ENCODE measurements at regions of chr19 and their contacts with region 1.

Region 1: DNA sequence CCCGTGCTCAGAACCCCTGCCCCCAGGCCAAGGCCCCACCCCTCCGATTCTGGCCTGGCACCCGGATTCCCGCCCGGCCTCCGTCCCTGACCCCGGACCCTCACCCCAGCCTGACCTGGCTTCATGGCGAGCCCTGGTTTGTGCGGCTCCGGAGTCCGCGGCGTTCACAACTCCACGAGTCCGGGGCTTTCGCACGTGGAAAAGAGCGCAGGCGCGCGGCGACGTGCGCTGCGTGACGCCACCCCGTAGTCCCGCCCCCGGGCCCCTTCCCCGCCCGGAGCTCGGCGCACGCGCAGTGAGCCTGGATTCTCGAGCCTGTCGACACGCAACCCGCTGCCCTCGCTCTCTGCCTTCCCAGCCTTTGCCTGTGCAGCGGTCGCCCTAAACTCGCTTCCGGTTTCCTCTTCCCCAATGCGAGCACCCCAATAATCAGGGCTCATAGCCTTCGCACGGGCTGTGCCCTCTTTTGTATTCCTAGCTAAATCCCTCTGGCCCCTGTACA is at the start of gene FBL:
- DNase-seq: peak; percentile 99
- ATAC-seq: peak; percentile 95 to 97 (median 95)
- H3K4me3 ChIP-seq: peak within 1 kb of the TSS; percentile 92
- H3K4me3 Mint-ChIP-seq: peak within 1 kb of the TSS; percentile 92
- H3K27ac ChIP-seq: peak within 1 kb of the TSS; percentile 89
- H3K27ac Mint-ChIP-seq: peak within 1 kb of the TSS; percentile 92 to 94
- H3K4me1 ChIP-seq: peaks cover 32% of the 10 kb centered on the region
- H3K4me1 Mint-ChIP-seq: peaks cover 48% of the 10 kb centered on the region in 2 donors
- H3K27me3 ChIP-seq: no peaks in the 10 kb centered on the region
- H3K27me3 Mint-ChIP-seq: peaks cover 0 to 9% of the 10 kb centered on the region in 2 donors
- CTCF ChIP-seq: no peak
- total RNA-seq, gene FBL: 181 to 213 (median 201) TPM

Region 2: GRCh38 chr19:39546599-39546998 is 299.6 kb before region 1 on chr19:
- intact Hi-C with region 1: loop called (anchors 2 kb)
- DNase-seq: no peak
- ATAC-seq: no peak
- H3K4me3 ChIP-seq: no peak overlapping the region
- H3K4me3 Mint-ChIP-seq: no peak overlapping the region
- H3K27ac ChIP-seq: no peak overlapping the region
- H3K27ac Mint-ChIP-seq: no peak overlapping the region
- H3K4me1 ChIP-seq: peaks cover under 1% of the 10 kb centered on the region
- H3K4me1 Mint-ChIP-seq: peaks cover 5 to 6% of the 10 kb centered on the region in 2 donors
- H3K27me3 ChIP-seq: no peaks in the 10 kb centered on the region
- H3K27me3 Mint-ChIP-seq: peaks cover 12 to 16% of the 10 kb centered on the region in 2 donors
- CTCF ChIP-seq: no peak

Region 3: GRCh38 chr19:39765091-39766076 is 80.8 kb before region 1 on chr19:
- intact Hi-C with region 1: loop called (anchors 2 kb)
- DNase-seq: peak in 1 of 2 donors; percentile 74
- ATAC-seq: no peak
- H3K4me3 ChIP-seq: no peak overlapping the region
- H3K4me3 Mint-ChIP-seq: no peak overlapping the region
- H3K27ac ChIP-seq: no peak overlapping the region
- H3K27ac Mint-ChIP-seq: no peak overlapping the region
- H3K4me1 ChIP-seq: no peaks in the 10 kb centered on the region
- H3K4me1 Mint-ChIP-seq: peaks cover 0 to 5% of the 10 kb centered on the region in 2 donors
- H3K27me3 ChIP-seq: no peaks in the 10 kb centered on the region
- H3K27me3 Mint-ChIP-seq: peaks cover 8 to 11% of the 10 kb centered on the region in 2 donors
- CTCF ChIP-seq: peak; percentile 74

Region 4: GRCh38 chr19:39792999-39793546 is 53.2 kb before region 1 on chr19:
- intact Hi-C with region 1: loop called (anchors 1 kb)
- DNase-seq: peak; percentile 75 to 85
- ATAC-seq: peak; percentile 90 to 96 (median 96)
- H3K4me3 ChIP-seq: peak overlapping the region; percentile 45
- H3K4me3 Mint-ChIP-seq: peak overlapping the region; percentile 68
- H3K27ac ChIP-seq: no peak overlapping the region
- H3K27ac Mint-ChIP-seq: no peak overlapping the region
- H3K4me1 ChIP-seq: peaks cover 9% of the 10 kb centered on the region
- H3K4me1 Mint-ChIP-seq: peaks cover 0 to 5% of the 10 kb centered on the region in 2 donors
- H3K27me3 ChIP-seq: no peaks in the 10 kb centered on the region
- H3K27me3 Mint-ChIP-seq: peaks cover 14 to 18% of the 10 kb centered on the region in 2 donors
- CTCF ChIP-seq: peak; percentile 94

Region 5: DNA sequence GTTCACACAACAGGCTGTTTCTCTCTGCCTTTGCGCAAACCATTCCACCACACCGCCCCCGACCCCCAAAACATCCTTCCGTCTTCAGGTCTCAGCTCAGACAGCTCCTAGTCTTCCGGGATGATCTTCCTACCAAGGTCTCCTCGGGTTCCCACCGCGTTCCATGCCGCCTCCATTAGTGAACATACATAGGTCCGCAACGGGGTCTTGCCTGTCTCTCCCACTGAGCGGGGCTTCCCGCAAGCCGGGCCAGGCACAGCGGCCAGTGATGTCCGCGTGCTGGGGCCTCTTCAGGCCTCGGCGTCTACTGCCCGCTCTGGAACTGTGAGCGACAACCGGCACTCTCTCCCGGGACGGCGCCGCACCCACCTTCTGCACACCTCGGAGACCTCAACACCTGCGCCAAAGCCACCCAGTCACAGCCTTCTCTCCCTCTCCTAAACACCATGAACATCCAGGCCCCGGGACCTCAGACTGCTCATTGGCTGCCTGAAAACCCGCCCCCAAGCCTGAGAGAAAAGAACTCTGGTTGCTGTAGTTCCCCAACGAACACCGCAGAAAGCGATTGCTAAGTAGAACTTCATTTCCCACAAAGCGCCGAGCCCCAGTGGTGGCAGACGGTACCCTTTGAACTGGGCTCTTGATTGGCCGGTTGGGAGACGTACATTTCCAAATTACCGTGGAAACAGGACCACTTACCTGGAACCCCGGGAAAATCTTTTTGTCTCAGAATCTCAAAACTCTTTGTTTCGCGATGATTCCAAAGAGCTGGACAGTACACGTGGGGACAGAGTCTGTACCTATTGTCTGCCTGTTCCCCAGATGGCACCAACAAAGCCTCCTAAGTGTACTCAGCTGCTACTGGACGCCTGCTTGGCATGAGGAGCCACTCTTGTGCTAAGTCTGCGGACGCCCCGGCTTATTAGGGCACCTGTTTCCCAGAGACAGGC is 21.8 kb before region 1 on chr19:
- intact Hi-C with region 1: loop called (anchors 1 kb)
- DNase-seq: peak; percentile 71 to 94
- ATAC-seq: peak; percentile 92 to 93 (median 93)
- H3K4me3 ChIP-seq: peak overlapping the region; percentile 80
- H3K4me3 Mint-ChIP-seq: no peak overlapping the region
- H3K27ac ChIP-seq: peak overlapping the region; percentile 73
- H3K27ac Mint-ChIP-seq: no peak overlapping the region
- H3K4me1 ChIP-seq: peaks cover 42% of the 10 kb centered on the region
- H3K4me1 Mint-ChIP-seq: peaks cover 21 to 22% of the 10 kb centered on the region in 2 donors
- H3K27me3 ChIP-seq: no peaks in the 10 kb centered on the region
- H3K27me3 Mint-ChIP-seq: no peaks in the 10 kb centered on the region
- CTCF ChIP-seq: no peak